ENCODE measurements at regions of chr1 and their contacts with region 1.

Region 1: DNA sequence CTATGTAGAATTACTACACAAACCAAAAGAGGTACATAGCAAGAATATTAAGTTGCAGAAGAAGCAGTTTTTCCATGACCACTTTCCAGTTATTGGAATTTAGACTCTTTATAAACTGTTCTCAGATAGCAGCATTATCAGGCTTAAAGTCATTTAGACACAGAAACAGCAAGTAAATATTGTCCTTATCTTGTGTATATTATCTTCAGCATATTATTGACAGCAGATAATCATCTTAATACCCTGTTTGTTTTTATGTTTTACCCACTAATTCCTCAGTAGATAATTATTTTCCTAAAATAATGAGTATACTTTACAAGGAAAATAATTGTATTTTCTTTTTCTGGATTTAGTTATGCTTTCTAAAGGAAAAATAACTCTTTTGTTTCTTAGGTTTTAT is 20.4 kb downstream of the SWT1 start:
- DNase-seq: no peak
- ATAC-seq: no peak
- H3K4me3 ChIP-seq: no peak overlapping the region
- H3K4me3 Mint-ChIP-seq: no peak overlapping the region
- H3K27ac ChIP-seq: no peak overlapping the region
- H3K27ac Mint-ChIP-seq: no peak overlapping the region
- H3K4me1 ChIP-seq: no peaks in the 10 kb centered on the region
- H3K4me1 Mint-ChIP-seq: peaks cover 12 to 32% (median 18%) of the 10 kb centered on the region in 3 donors
- H3K27me3 ChIP-seq: no peaks in the 10 kb centered on the region
- H3K27me3 Mint-ChIP-seq: no peaks in the 10 kb centered on the region

Region 2: DNA sequence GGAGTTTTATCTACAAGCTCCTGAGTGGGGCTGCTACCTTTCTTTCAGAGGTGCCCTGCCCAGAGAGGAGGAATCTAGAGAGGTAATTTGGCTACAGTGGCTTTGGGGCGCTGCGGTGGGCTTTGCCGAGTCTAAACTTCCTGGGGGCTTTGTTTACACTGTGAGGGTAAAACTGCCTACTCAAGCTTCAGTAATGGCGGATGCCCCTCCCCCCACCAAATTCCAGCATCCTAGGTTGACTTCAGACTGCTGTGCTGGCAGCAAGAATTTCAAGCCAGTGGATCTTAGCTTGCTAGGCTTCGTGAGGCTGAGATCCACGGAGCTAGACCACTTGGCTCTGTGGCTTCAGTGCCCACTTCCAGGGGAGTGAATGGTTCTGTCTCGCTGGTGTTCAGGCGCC is 23.5 kb after region 1 on chr1:
- CTCF ChIA-PET with region 1: no interaction called
- POLR2A ChIA-PET with region 1: no interaction called
- DNase-seq: no peak
- ATAC-seq: no peak
- H3K4me3 ChIP-seq: no peak overlapping the region
- H3K4me3 Mint-ChIP-seq: no peak overlapping the region
- H3K27ac ChIP-seq: no peak overlapping the region
- H3K27ac Mint-ChIP-seq: no peak overlapping the region
- H3K4me1 ChIP-seq: no peaks in the 10 kb centered on the region
- H3K4me1 Mint-ChIP-seq: no peaks in the 10 kb centered on the region
- H3K27me3 ChIP-seq: peaks cover 0 to 3% of the 10 kb centered on the region in 2 experiments
- H3K27me3 Mint-ChIP-seq: no peaks in the 10 kb centered on the region

Region 3: DNA sequence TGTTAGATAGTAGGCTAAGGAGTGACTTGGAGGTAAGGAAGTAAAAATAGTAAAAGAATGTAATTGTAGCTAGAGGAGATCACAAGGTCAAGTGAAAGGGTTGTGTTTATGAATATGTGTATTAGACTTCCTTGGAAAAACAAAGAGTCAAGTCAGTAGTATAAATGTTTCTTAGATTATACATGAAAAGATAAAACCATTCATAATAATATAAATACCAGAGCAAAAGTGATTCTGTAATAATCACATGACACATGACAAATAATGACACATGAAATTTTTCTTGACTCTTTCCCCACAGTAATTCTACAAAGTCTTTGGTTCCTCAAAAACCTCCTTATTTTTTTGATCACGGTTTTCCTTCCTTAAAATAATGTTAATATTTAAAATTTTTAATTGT is 83.3 kb after region 1 on chr1:
- CTCF ChIA-PET with region 1: no interaction called
- POLR2A ChIA-PET with region 1: interaction called in 1 of 2 experiments, 15 read pairs
- DNase-seq: no peak
- ATAC-seq: no peak
- H3K4me3 ChIP-seq: no peak overlapping the region
- H3K4me3 Mint-ChIP-seq: no peak overlapping the region
- H3K27ac ChIP-seq: no peak overlapping the region
- H3K27ac Mint-ChIP-seq: no peak overlapping the region
- H3K4me1 ChIP-seq: peaks cover 0 to 3% of the 10 kb centered on the region in 2 experiments
- H3K4me1 Mint-ChIP-seq: peaks cover 20 to 30% (median 24%) of the 10 kb centered on the region in 3 donors
- H3K27me3 ChIP-seq: no peaks in the 10 kb centered on the region
- H3K27me3 Mint-ChIP-seq: no peaks in the 10 kb centered on the region

Region 4: DNA sequence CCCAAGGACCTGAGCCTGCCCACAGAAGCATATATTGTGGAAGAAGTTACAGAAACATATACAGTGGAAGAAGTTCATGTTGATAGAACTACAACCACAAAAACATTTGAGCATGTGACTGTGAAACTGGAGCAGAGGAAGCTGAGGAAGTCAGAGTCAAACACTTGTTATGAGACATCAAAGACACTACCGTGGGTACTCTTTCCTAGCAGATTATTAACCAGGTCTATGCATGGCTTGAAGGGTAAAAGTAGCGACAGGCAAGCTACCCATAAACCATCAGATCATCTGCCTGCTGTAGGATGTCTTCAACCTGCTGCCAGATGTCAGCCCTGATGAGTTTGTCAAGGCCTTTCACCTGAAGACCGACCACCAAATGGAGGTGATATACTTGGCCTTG is 103.9 kb after region 1 on chr1:
- CTCF ChIA-PET with region 1: no interaction called
- POLR2A ChIA-PET with region 1: interaction called in 1 of 2 experiments, 10 read pairs
- DNase-seq: peak in 31 of 35 experiments; percentile 9 to 70 (median 25)
- ATAC-seq: peak; percentile 93 to 97 (median 96)
- H3K4me3 ChIP-seq: no peak overlapping the region
- H3K4me3 Mint-ChIP-seq: peak overlapping the region; percentile 62 to 80 (median 68)
- H3K27ac ChIP-seq: peak overlapping the region; percentile 75
- H3K27ac Mint-ChIP-seq: peak overlapping the region; percentile 99 to 100
- H3K4me1 ChIP-seq: peaks cover 32 to 38% of the 10 kb centered on the region in 2 experiments
- H3K4me1 Mint-ChIP-seq: peaks cover 68 to 69% (median 68%) of the 10 kb centered on the region in 3 donors
- H3K27me3 ChIP-seq: no peaks in the 10 kb centered on the region
- H3K27me3 Mint-ChIP-seq: no peaks in the 10 kb centered on the region

Region 5: GRCh38 chr1:185551008-185551407 is 373.6 kb after region 1 on chr1:
- CTCF ChIA-PET with region 1: no interaction called
- POLR2A ChIA-PET with region 1: no interaction called
- DNase-seq: no peak
- ATAC-seq: no peak
- H3K4me3 ChIP-seq: no peak overlapping the region
- H3K4me3 Mint-ChIP-seq: no peak overlapping the region
- H3K27ac ChIP-seq: no peak overlapping the region
- H3K27ac Mint-ChIP-seq: no peak overlapping the region
- H3K4me1 ChIP-seq: no peaks in the 10 kb centered on the region
- H3K4me1 Mint-ChIP-seq: peaks cover 0 to 10% (median 2%) of the 10 kb centered on the region in 3 donors
- H3K27me3 ChIP-seq: no peaks in the 10 kb centered on the region
- H3K27me3 Mint-ChIP-seq: no peaks in the 10 kb centered on the region